ENCODE measurements at regions of chr17 and their contacts with region 1.

Region 1: DNA sequence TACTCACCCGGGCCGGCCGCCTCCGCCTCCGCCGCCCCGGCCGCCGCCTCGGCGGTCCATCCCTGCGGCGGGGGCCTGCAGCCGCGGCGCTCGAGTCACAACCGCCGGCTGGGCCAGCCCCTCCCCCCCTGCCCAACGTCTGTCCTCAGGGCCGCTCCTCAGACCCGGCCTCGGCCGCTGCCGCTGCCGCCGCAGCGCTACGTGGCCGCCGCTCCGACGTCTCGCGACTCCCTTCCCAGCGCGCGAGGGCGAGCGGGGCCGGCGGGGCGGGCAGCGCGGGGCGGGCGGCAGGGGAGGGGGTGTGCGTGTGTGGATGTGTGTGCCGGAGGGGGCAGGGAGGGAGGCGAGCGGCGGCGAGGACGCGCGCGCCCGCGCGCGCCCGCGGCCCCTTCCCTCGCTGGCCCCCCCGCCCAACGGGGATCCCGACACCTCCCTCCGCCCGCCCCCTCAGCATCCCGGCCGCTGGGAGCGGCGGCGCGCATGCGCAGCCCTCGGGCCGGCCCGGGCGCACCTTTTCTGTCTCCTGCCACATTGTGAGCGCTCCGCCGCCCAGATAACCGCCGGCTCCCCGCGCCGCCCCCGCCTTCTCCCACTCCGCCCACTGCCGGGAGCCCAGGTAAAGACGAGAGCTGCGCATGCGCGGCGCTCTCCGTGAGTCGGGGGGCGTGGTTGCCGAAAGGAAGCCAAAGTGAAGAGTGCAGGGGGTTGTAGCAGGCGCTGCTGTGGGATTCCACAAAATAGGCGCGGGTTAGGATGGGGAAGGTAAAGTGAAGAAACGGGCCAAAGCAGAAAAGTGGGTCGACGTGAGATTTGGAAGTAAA is at the start of gene ZNF652:
- DNase-seq: peak; percentile 91
- H3K4me3 Mint-ChIP-seq: peak within 1 kb of the TSS; percentile 90
- H3K27ac Mint-ChIP-seq: peak within 1 kb of the TSS; percentile 93
- H3K4me1 Mint-ChIP-seq: peaks cover 37% of the 10 kb centered on the region
- H3K27me3 Mint-ChIP-seq: no peaks in the 10 kb centered on the region
- total RNA-seq, gene ZNF652: 5.5 to 5.8 TPM

Region 2: GRCh38 chr17:49298371-49298976 is 63.6 kb before region 1 on chr17:
- CTCF ChIA-PET with region 1: no interaction called
- intact Hi-C with region 1: no loop called
- DNase-seq: no peak
- H3K4me3 Mint-ChIP-seq: no peak overlapping the region
- H3K27ac Mint-ChIP-seq: no peak overlapping the region
- H3K4me1 Mint-ChIP-seq: peaks cover 4% of the 10 kb centered on the region
- H3K27me3 Mint-ChIP-seq: no peaks in the 10 kb centered on the region

Region 3: DNA sequence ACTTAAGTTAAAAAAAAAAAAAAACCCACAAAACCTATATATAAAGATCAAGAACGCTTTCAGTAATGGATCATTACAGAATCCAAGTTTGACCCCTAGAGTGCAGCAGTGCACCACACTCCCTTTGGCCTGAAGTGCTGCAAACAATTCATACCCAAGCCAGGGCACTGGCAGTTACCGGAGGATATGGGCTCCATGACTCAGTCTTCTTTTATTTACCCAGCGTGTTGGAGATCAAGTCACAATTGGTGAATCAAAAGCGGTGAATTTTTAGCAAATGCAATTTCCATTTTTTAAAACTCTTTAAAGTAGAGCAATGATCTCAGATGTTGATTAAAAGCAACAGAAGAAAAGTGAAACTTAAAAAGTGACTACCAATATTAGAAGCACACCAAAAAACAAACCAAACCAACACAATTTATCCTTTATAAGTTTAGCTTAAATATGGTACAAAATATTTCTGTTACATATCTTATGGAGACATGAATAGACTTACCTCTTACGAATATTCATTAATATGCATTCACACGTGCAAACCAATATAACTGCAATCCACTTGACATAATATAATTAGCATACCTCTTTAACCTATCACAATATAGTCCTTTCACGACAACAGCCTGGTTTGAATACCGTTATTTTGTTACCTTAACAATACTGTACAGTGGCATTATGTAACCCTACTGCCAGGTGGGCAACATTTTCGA is 46.4 kb before region 1 on chr17:
- CTCF ChIA-PET with region 1: interaction called, 105 read pairs
- intact Hi-C with region 1: loop called (anchors 1 kb)
- DNase-seq: peak; percentile 91
- H3K4me3 Mint-ChIP-seq: peak overlapping the region; percentile 41
- H3K27ac Mint-ChIP-seq: peak overlapping the region; percentile 62
- H3K4me1 Mint-ChIP-seq: peaks cover 23% of the 10 kb centered on the region
- H3K27me3 Mint-ChIP-seq: no peaks in the 10 kb centered on the region

Region 4: DNA sequence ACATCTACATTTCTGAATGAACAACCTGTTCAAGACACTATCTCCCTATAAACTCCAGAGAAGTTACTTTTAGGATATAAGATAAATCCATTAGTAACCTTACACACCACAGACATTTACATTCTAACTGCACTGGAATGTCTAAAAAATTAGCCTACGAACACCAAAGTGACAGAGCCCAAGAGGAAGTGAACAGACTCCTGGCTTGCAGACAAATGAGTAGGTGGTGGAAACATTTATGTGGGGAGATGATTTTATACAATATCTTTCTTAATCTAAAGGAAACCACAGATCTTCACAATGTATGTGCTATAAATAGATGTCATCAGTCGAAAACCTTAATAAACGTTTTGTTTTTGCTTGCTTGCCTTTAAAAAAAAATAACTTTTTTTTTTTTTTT is 18.8 kb before region 1 on chr17:
- CTCF ChIA-PET with region 1: interaction called, 11 read pairs
- intact Hi-C with region 1: loop called (anchors 1 kb)
- DNase-seq: peak; percentile 31
- H3K4me3 Mint-ChIP-seq: peak overlapping the region; percentile 26
- H3K27ac Mint-ChIP-seq: peak overlapping the region; percentile 43
- H3K4me1 Mint-ChIP-seq: peaks cover 64% of the 10 kb centered on the region
- H3K27me3 Mint-ChIP-seq: no peaks in the 10 kb centered on the region

Region 5: GRCh38 chr17:49414622-49415350 is 52.7 kb after region 1 on chr17 and contains the start of gene PHB1:
- CTCF ChIA-PET with region 1: no interaction called
- intact Hi-C with region 1: loop called (anchors 1 kb)
- DNase-seq: peak; percentile 99
- H3K4me3 Mint-ChIP-seq: peak within 1 kb of the TSS; percentile 100
- H3K27ac Mint-ChIP-seq: peak within 1 kb of the TSS; percentile 78
- H3K4me1 Mint-ChIP-seq: peaks cover 32% of the 10 kb centered on the region
- H3K27me3 Mint-ChIP-seq: no peaks in the 10 kb centered on the region
- total RNA-seq, gene PHB1: 390 to 404 TPM

Region 6: GRCh38 chr17:49588726-49589576 is 226.8 kb after region 1 on chr17:
- CTCF ChIA-PET with region 1: no interaction called
- intact Hi-C with region 1: no loop called
- DNase-seq: no peak
- H3K4me3 Mint-ChIP-seq: no peak overlapping the region
- H3K27ac Mint-ChIP-seq: no peak overlapping the region
- H3K4me1 Mint-ChIP-seq: no peaks in the 10 kb centered on the region
- H3K27me3 Mint-ChIP-seq: no peaks in the 10 kb centered on the region

Region 7: GRCh38 chr17:50055426-50056230 is 693.5 kb after region 1 on chr17 and contains the start of gene ITGA3:
- CTCF ChIA-PET with region 1: no interaction called
- intact Hi-C with region 1: loop called (anchors 5 kb)
- DNase-seq: peak; percentile 85
- H3K4me3 Mint-ChIP-seq: peak within 1 kb of the TSS; percentile 87
- H3K27ac Mint-ChIP-seq: peak within 1 kb of the TSS; percentile 81
- H3K4me1 Mint-ChIP-seq: peaks cover 38% of the 10 kb centered on the region
- H3K27me3 Mint-ChIP-seq: no peaks in the 10 kb centered on the region
- total RNA-seq, gene ITGA3: 17.9 to 19.3 TPM

Measured in activated naive CD4-positive, alpha-beta T cell treated with anti-CD3 and anti-CD28 coated beads for 36 hours (primary cell).